ENCODE measurements at regions of chr12 and their contacts with region 1.

Region 1: DNA sequence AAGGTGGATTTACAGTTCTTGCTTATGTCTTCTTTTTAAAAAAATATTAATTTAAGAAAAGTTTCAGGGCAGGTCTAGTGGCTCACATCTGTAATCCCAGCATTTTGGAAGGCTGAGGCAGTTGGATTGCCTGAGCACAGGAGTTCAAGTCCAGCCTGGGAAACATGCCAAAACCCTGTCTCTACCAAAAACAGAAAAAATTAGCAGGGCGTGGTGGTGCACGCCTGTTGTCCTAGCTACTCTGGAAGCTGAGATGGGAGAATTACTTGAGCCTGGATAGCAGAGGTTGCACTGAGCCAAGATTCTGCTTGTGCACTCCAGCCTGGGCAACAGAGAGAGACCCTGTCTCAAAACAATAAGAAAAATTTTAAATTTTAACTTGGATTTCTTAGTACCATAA is 5.4 kb upstream of the TAS2R46 start:
- DNase-seq: no peak
- H3K4me3 ChIP-seq: no peak overlapping the region
- H3K27ac ChIP-seq: no peak overlapping the region
- H3K4me1 ChIP-seq: no peaks in the 10 kb centered on the region
- H3K27me3 ChIP-seq: no peaks in the 10 kb centered on the region
- CTCF ChIP-seq: no peak
- POLR2A ChIP-seq: no peak

Region 2: DNA sequence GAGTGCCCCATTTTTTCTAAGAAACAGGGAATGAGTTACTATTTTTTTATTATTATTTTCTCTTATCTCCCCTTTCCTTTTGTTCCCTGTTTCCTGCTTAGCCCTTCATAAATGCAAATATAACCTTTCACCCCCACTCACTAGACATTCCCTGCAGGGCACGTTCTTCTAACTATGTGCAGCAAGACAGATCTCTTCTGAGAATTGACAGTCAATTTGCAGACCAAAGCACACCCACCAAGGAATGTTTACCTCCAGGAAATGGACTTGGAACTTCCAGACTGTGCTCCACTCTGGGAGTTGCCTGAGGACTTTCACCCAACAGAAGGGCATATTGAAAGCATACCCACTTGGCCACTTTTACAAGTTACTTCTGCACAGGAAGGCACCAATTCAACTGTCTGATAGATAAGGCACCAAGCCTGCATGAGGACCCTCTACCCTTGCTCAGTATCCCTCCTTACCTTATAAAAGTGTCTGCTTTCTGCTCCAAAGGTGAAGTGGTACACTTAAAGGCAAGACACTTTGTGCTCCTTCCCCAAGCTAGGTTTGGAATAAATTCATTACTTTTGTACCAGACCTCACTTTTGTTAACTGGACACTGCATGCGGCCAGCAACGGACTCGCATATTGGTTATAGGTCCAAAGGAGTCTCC is 51.6 kb before region 1 on chr12:
- CTCF ChIA-PET with region 1: interaction called, 3 read pairs
- POLR2A ChIA-PET with region 1: no interaction called
- dilution Hi-C with region 1: no loop called
- intact Hi-C with region 1: loop called (anchors 1 kb)
- DNase-seq: peak; percentile 86
- H3K4me3 ChIP-seq: no peak overlapping the region
- H3K27ac ChIP-seq: no peak overlapping the region
- H3K4me1 ChIP-seq: peaks cover 13% of the 10 kb centered on the region
- H3K27me3 ChIP-seq: no peaks in the 10 kb centered on the region
- CTCF ChIP-seq: no peak
- POLR2A ChIP-seq: no peak